ENCODE measurements at regions of chr4 and their contacts with region 1.

Region 1: DNA sequence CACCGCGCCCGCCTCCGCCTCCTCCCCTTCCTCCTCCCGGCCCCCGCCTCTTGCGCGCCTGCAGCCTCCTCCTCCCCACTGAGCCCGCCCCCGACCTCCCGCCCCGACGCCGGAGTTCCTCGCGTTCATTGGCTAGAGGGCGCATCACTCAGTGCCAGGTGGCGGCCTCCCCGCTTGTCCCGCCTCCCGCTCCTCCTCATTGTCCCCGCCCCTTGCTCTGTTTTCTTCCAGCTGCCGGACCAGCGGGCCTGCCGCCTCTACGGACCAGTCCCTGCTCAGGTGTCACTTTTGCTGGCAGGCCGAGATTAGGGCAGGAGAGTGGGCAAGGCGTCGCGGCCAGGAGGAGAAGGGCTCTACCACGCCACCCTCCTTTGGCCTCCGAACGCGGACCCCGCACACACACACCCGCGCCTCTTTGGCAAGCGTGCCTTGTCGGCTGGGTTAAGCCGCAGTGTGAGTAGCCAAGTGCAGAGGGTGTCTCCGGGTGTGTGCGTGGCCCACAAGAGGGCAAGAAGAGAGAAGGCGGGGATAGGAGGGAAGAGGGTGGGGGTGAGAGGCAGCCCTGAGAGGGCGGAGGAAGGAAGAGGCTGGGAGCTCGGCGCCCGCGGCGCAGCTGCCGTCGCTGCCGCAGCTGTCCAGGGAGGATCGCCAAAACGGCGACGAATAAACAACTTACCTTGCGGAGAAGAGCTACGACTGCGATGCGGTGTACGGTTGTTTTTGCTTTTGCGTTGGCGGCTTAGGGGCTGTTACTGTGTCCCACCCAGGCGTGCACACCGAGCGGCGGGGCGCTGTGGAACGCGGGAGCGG is 436 bp upstream of the PPP3CA start:
- DNase-seq: peak; percentile 98
- ATAC-seq: peak; percentile 80
- H3K4me3 ChIP-seq: peak overlapping the region; percentile 77 to 96 (median 95)
- H3K4me3 Mint-ChIP-seq: peak overlapping the region; percentile 99
- H3K27ac ChIP-seq: peak overlapping the region; percentile 85 to 87
- H3K27ac Mint-ChIP-seq: peak overlapping the region; percentile 95
- H3K4me1 ChIP-seq: peaks cover 22 to 36% of the 10 kb centered on the region in 2 donors
- H3K4me1 Mint-ChIP-seq: peaks cover 42% of the 10 kb centered on the region
- H3K27me3 ChIP-seq: no peaks in the 10 kb centered on the region
- H3K27me3 Mint-ChIP-seq: no peaks in the 10 kb centered on the region
- CTCF ChIP-seq: no peak

Region 2: GRCh38 chr4:99949034-99949998 is 1398.4 kb before region 1 on chr4:
- CTCF ChIA-PET with region 1: no interaction called
- POLR2A ChIA-PET with region 1: no interaction called
- intact Hi-C with region 1: loop called (anchors 2 kb)
- DNase-seq: peak; percentile 93
- ATAC-seq: peak; percentile 26
- H3K4me3 ChIP-seq: peak overlapping the region; percentile 84 to 96 (median 84)
- H3K4me3 Mint-ChIP-seq: no peak overlapping the region
- H3K27ac ChIP-seq: peak overlapping the region; percentile 83 to 93
- H3K27ac Mint-ChIP-seq: no peak overlapping the region
- H3K4me1 ChIP-seq: peaks cover 32 to 37% of the 10 kb centered on the region in 2 donors
- H3K4me1 Mint-ChIP-seq: peaks cover 33% of the 10 kb centered on the region
- H3K27me3 ChIP-seq: no peaks in the 10 kb centered on the region
- H3K27me3 Mint-ChIP-seq: no peaks in the 10 kb centered on the region
- CTCF ChIP-seq: peak; percentile 88

Region 3: DNA sequence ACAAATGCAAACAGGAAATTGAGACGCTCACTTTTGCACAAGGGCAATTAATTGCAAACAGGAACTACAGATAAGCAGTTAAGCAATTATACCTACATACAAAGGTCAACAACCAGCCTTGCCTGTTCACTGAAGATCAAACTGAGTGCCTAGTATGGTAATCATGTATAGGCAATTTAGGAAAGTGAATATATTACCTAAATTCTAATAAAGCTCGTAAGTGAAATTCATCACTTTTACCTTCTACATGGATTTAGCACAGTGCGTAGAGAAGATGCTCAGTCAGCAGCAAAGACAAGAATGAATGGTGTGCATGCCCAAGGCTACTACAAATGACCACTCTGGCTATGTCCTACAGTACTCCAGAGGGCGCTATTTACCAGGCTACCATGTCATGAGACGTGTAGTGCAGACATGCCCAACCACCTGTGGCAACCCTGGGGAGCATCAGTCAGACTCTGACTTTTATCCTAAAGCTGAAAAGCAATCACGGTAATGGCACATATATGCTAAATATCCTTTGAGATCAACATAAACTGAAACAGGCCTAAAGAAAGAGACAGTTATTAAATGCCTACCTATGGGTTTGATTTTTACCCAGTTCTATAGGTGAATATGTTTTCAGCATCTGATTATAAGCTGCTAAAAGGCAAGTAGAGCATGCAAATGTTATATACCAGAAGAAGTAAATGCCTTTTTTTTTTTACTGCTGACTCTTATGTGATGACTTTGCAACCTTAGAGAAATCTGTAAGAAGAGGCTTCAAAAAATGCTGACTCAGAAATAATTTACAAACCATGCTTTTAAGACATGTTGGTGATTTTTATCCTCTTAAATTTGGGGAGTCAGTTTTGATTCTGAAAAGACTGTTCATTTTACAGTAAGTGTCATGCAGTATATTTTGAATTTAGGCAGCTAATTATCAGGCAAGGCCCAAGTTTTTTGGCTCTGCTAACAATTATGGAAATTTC is 178.4 kb before region 1 on chr4:
- CTCF ChIA-PET with region 1: interaction called, 10 read pairs
- POLR2A ChIA-PET with region 1: interaction called, 3 read pairs
- intact Hi-C with region 1: no loop called
- DNase-seq: peak; percentile 76
- ATAC-seq: peak; percentile 96
- H3K4me3 ChIP-seq: no peak overlapping the region
- H3K4me3 Mint-ChIP-seq: no peak overlapping the region
- H3K27ac ChIP-seq: no peak overlapping the region
- H3K27ac Mint-ChIP-seq: no peak overlapping the region
- H3K4me1 ChIP-seq: peaks cover 7 to 18% of the 10 kb centered on the region in 2 donors
- H3K4me1 Mint-ChIP-seq: peaks cover 27% of the 10 kb centered on the region
- H3K27me3 ChIP-seq: no peaks in the 10 kb centered on the region
- H3K27me3 Mint-ChIP-seq: no peaks in the 10 kb centered on the region
- CTCF ChIP-seq: peak; percentile 77

Region 4: GRCh38 chr4:101328063-101328602 is 19.6 kb before region 1 on chr4:
- CTCF ChIA-PET with region 1: interaction called, 8 read pairs
- POLR2A ChIA-PET with region 1: interaction called, 12 read pairs
- intact Hi-C with region 1: loop called (anchors 2 kb)
- DNase-seq: peak; percentile 52
- ATAC-seq: peak; percentile 65
- H3K4me3 ChIP-seq: no peak overlapping the region
- H3K4me3 Mint-ChIP-seq: peak overlapping the region; percentile 82
- H3K27ac ChIP-seq: peak overlapping the region; percentile 35 to 74
- H3K27ac Mint-ChIP-seq: peak overlapping the region; percentile 76
- H3K4me1 ChIP-seq: peaks cover 28 to 56% of the 10 kb centered on the region in 2 donors
- H3K4me1 Mint-ChIP-seq: peaks cover 90% of the 10 kb centered on the region
- H3K27me3 ChIP-seq: no peaks in the 10 kb centered on the region
- H3K27me3 Mint-ChIP-seq: no peaks in the 10 kb centered on the region
- CTCF ChIP-seq: no peak

Region 5: GRCh38 chr4:101790521-101791188 is 442.9 kb after region 1 on chr4 and contains the start of gene BANK1:
- CTCF ChIA-PET with region 1: interaction called, 3 read pairs
- POLR2A ChIA-PET with region 1: interaction called, 10 read pairs
- intact Hi-C with region 1: loop called (anchors 5 kb)
- DNase-seq: peak; percentile 95
- ATAC-seq: peak; percentile 93
- H3K4me3 ChIP-seq: peak within 1 kb of the TSS; percentile 65 to 99 (median 83)
- H3K4me3 Mint-ChIP-seq: peak within 1 kb of the TSS; percentile 90
- H3K27ac ChIP-seq: peak within 1 kb of the TSS; percentile 91 to 95
- H3K27ac Mint-ChIP-seq: peak within 1 kb of the TSS; percentile 98
- H3K4me1 ChIP-seq: peaks cover 12 to 47% of the 10 kb centered on the region in 2 donors
- H3K4me1 Mint-ChIP-seq: peaks cover 53% of the 10 kb centered on the region
- H3K27me3 ChIP-seq: no peaks in the 10 kb centered on the region
- H3K27me3 Mint-ChIP-seq: no peaks in the 10 kb centered on the region
- CTCF ChIP-seq: peak; percentile 53
- total RNA-seq, gene BANK1: 354 and 368 TPM in 2 replicates

Region 6: GRCh38 chr4:102344954-102345794 is 997.4 kb after region 1 on chr4 and contains the start of gene SLC39A8:
- CTCF ChIA-PET with region 1: no interaction called
- POLR2A ChIA-PET with region 1: interaction called, 3 read pairs
- intact Hi-C with region 1: loop called (anchors 10 kb)
- DNase-seq: peak; percentile 93
- ATAC-seq: peak; percentile 88
- H3K4me3 ChIP-seq: peak within 1 kb of the TSS; percentile 75 to 91 (median 84)
- H3K4me3 Mint-ChIP-seq: peak within 1 kb of the TSS; percentile 87
- H3K27ac ChIP-seq: peak within 1 kb of the TSS; percentile 88 to 90
- H3K27ac Mint-ChIP-seq: peak within 1 kb of the TSS; percentile 90
- H3K4me1 ChIP-seq: peaks cover 21 to 23% of the 10 kb centered on the region in 2 donors
- H3K4me1 Mint-ChIP-seq: peaks cover 24% of the 10 kb centered on the region
- H3K27me3 ChIP-seq: no peaks in the 10 kb centered on the region
- H3K27me3 Mint-ChIP-seq: no peaks in the 10 kb centered on the region
- CTCF ChIP-seq: peak; percentile 91
- total RNA-seq, gene SLC39A8: 8.4 and 10.2 TPM in 2 replicates

Region 7: GRCh38 chr4:102492531-102493241 is 1144.9 kb after region 1 on chr4:
- CTCF ChIA-PET with region 1: no interaction called
- POLR2A ChIA-PET with region 1: no interaction called
- intact Hi-C with region 1: no loop called
- DNase-seq: no peak
- ATAC-seq: no peak
- H3K4me3 ChIP-seq: no peak overlapping the region
- H3K4me3 Mint-ChIP-seq: no peak overlapping the region
- H3K27ac ChIP-seq: no peak overlapping the region
- H3K27ac Mint-ChIP-seq: no peak overlapping the region
- H3K4me1 ChIP-seq: no peaks in the 10 kb centered on the region
- H3K4me1 Mint-ChIP-seq: peaks cover 6% of the 10 kb centered on the region
- H3K27me3 ChIP-seq: no peaks in the 10 kb centered on the region
- H3K27me3 Mint-ChIP-seq: no peaks in the 10 kb centered on the region
- CTCF ChIP-seq: no peak